ENCODE measurements at regions of chr17 and their contacts with region 1.

Region 1: GRCh38 chr17:18183334-18184142 is at the start of gene ALKBH5:
- DNase-seq: peak; percentile 90 to 99 (median 98)
- H3K4me3 ChIP-seq: peak within 1 kb of the TSS; percentile 64 to 99 (median 93)
- H3K27ac ChIP-seq: peak within 1 kb of the TSS; percentile 90 to 100 (median 98)
- H3K27me3 ChIP-seq: no peaks in the 10 kb centered on the region
- CTCF ChIP-seq: peak in 32 of 56 donors; percentile 0 to 65 (median 31)
- total RNA-seq, gene ALKBH5: 99.8 to 173 (median 120) TPM

Region 2: GRCh38 chr17:17940451-17940911 is 243.1 kb before region 1 on chr17:
- intact Hi-C with region 1: no loop called
- DNase-seq: no peak
- H3K4me3 ChIP-seq: no peak overlapping the region
- H3K27ac ChIP-seq: peak overlapping the region in 6 of 59 donors; percentile 4 to 57 (median 24)
- H3K27me3 ChIP-seq: no peaks in the 10 kb centered on the region
- CTCF ChIP-seq: no peak

Region 3: GRCh38 chr17:18070861-18071340 is 112.6 kb before region 1 on chr17:
- intact Hi-C with region 1: no loop called
- DNase-seq: peak in 1 of 10 donors; percentile 15
- H3K4me3 ChIP-seq: peak overlapping the region in 26 of 59 donors; percentile 1 to 46 (median 22)
- H3K27ac ChIP-seq: peak overlapping the region in 1 of 59 donors; percentile 18
- H3K27me3 ChIP-seq: no peaks in the 10 kb centered on the region
- CTCF ChIP-seq: no peak

Region 4: GRCh38 chr17:18087610-18088491 is 95.7 kb before region 1 on chr17 and contains the start of gene DRG2:
- intact Hi-C with region 1: loop called in 1 of 2 experiments (anchors 10 kb)
- DNase-seq: peak; percentile 84 to 94 (median 89)
- H3K4me3 ChIP-seq: peak within 1 kb of the TSS; percentile 62 to 98 (median 86)
- H3K27ac ChIP-seq: peak within 1 kb of the TSS; percentile 18 to 96 (median 85)
- H3K27me3 ChIP-seq: peaks cover 0 to 3% (median 0%) of the 10 kb centered on the region in 45 donors
- CTCF ChIP-seq: peak in 55 of 56 donors; percentile 16 to 70 (median 51)
- total RNA-seq, gene DRG2: 27.0 to 50.8 (median 38.5) TPM

Region 5: DNA sequence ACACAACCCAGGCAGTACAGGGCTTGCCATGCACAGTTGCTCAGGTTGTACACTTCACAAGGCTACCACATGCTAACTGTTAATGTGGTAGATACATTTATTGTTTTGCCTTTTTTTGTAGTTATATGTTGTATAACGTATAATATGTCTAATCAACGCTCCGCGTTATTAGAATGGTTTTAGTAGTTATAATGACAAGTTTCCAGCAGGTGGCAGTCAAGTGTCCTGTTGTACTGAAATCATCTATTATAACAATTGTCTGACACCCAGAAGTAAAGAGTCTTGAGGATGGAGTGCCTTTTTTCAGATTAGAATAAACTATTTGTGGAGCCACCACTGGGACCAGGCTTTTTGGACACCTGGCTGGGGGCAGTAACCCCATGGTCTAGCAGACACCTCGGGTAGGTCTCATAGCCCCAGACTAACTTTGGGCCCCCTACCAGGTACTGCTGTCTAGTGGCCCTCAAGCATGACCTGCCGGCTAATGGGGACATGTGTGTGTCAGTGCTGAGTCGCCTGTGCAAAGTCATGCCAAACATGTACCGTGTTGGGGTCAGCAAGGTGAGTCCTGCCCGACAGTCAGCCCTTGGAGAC is 42.2 kb before region 1 on chr17:
- intact Hi-C with region 1: loop called (anchors 5 kb)
- DNase-seq: peak in 1 of 10 donors; percentile 28
- H3K4me3 ChIP-seq: no peak overlapping the region
- H3K27ac ChIP-seq: no peak overlapping the region
- H3K27me3 ChIP-seq: no peaks in the 10 kb centered on the region
- CTCF ChIP-seq: peak; percentile 42 to 78 (median 69)

Region 6: GRCh38 chr17:18217412-18218015 is 34.0 kb after region 1 on chr17:
- intact Hi-C with region 1: loop called in 1 of 2 experiments (anchors 5 kb)
- DNase-seq: peak; percentile 60 to 89 (median 82)
- H3K4me3 ChIP-seq: no peak overlapping the region
- H3K27ac ChIP-seq: peak overlapping the region in 2 of 59 donors; percentile 7 to 53
- H3K27me3 ChIP-seq: no peaks in the 10 kb centered on the region
- CTCF ChIP-seq: peak; percentile 55 to 95 (median 88)

Region 7: GRCh38 chr17:18225121-18225566 is 41.6 kb after region 1 on chr17:
- intact Hi-C with region 1: loop called (anchors 1 to 5 kb)
- DNase-seq: peak; percentile 92 to 98 (median 96)
- H3K4me3 ChIP-seq: peak overlapping the region in 58 of 59 donors; percentile 38 to 86 (median 56)
- H3K27ac ChIP-seq: peak overlapping the region in 40 of 59 donors; percentile 13 to 82 (median 56)
- H3K27me3 ChIP-seq: no peaks in the 10 kb centered on the region
- CTCF ChIP-seq: peak in 10 of 56 donors; percentile 8 to 29 (median 18)

Region 8: DNA sequence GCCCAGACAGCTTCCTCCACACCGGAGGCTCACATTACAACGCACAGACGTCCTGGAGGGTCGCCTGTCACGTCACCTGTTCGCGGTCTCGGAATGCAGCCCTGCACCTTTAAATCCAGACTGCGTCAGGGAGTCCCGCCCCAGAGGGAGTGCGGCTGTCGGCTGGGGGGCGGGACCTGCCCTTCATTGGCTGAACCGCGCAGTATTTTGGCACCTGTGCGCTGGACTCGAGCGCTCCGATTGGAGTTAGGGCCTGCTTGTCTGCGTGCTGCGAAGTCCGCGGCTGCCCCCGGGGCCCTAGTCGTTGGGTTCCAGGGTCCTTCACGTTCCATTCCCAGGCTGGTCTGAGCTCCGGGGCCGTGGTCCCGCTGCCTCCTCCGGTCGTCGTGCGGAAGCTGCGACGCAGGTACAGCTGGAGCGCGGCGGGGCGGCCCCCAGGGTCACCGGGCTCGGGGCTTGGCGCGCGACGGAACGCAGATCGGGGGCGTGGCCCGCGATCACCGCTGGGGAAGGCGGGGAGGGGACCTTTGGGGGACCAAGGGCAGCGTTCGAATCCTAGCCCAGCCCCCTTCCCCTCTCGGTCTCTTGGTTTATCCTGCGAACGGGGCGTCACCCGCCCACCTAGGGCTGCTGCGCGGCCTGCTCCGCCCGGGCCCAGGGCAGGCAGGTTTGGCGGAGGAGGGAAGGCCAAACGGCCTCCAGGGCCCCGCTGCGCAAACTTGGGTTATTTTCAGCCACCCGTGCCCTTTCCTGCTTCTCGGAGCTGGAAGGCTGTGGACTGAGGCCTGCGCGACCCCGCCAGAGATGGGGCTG is 77.0 kb after region 1 on chr17 and contains the start of gene MIEF2:
- intact Hi-C with region 1: loop called in 1 of 2 experiments (anchors 5 kb)
- DNase-seq: peak; percentile 91 to 98 (median 97)
- H3K4me3 ChIP-seq: peak within 1 kb of the TSS; percentile 70 to 99 (median 94)
- H3K27ac ChIP-seq: peak within 1 kb of the TSS in 57 of 59 donors; percentile 52 to 96 (median 84)
- H3K27me3 ChIP-seq: no peaks in the 10 kb centered on the region
- CTCF ChIP-seq: peak in 14 of 56 donors; percentile 5 to 43 (median 22)
- total RNA-seq, gene MIEF2: 12.6 to 31.3 (median 19.8) TPM

Region 9: DNA sequence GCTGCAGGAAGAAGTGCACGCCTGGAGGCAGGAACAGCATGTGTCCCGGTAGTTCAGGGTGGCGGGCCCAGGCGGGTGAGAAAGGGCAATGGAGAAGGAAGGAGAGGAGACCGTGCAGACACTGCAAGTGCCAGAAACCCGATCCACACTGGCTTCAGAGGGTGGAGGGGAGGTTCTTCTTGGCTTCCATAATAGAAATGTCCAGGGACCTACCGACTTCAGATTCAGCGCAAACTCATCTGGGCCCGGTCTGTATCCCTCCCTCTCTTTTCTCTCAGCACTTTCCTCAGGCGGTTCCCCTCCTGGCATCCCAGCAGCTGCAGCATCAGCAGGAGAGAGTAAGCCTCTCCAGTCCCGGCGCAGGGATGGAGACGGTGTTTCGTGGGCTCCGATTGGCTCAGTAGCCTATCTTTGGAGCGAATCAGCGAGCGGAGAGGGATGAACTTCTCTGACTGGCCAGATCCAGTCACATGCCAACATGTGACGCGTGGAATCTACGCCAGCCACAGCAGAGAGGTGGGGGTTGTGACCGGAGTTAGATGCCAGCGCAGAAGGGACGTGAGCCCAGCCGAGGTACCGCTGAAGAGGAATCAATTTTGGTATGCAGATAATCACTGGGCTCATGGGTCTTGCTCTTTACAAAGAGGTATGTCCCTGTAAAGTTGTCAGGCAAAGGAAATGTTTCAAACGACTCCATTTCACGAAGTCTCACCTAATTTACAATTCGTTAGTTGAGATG is 672.5 kb after region 1 on chr17:
- intact Hi-C with region 1: loop called in 1 of 2 experiments (anchors 10 kb)
- DNase-seq: peak; percentile 85 to 96 (median 95)
- H3K4me3 ChIP-seq: peak overlapping the region; percentile 59 to 97 (median 77)
- H3K27ac ChIP-seq: peak overlapping the region; percentile 61 to 99 (median 93)
- H3K27me3 ChIP-seq: no peaks in the 10 kb centered on the region
- CTCF ChIP-seq: peak in 20 of 56 donors; percentile 2 to 50 (median 18)